Activated naive CD4-positive, alpha-beta T cell treated with anti-CD3 and anti-CD28 coated beads for 36 hours (primary cell): ENCODE measurements at regions of chr11 and their contacts with region 1.

Region 1: DNA sequence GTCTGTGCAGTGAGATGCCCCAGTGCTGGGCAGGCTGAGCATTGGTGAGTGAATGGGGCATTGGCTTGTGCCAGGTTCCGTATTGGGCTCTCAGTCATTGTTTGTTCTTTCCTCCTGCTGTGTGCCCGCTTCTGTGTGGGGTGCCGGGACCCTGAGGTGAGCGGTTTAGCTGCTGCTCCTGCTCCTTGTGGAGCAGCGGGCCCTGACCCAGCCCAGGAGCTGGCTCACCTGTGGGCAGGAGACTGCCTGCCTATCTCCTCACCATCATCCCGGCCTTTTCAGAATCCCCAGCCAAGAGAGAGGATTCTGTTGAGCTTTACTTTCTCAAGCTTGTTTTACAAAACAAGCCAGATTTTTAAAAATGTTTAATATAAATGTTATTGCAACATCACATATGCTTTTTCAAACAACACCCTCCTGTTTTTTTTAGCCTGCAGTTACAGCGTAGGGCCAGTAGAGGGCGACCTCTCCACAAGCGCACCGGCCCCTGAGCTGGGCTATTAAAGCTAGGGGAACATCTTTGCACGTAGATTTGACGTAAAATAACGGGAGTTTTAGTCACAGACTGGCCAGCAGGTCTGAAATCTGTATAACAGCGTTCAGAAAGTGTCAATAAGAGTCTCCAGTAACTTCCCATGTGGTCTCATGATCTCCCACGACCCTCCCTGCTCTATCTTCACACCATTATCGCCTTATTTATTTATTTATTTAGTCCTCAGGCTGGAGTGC is 25.1 kb upstream of the RELT start:
- DNase-seq: peak; percentile 73
- H3K4me3 Mint-ChIP-seq: no peak overlapping the region
- H3K27ac Mint-ChIP-seq: peak overlapping the region; percentile 38
- H3K4me1 Mint-ChIP-seq: no peaks in the 10 kb centered on the region
- H3K27me3 Mint-ChIP-seq: no peaks in the 10 kb centered on the region

Region 2: DNA sequence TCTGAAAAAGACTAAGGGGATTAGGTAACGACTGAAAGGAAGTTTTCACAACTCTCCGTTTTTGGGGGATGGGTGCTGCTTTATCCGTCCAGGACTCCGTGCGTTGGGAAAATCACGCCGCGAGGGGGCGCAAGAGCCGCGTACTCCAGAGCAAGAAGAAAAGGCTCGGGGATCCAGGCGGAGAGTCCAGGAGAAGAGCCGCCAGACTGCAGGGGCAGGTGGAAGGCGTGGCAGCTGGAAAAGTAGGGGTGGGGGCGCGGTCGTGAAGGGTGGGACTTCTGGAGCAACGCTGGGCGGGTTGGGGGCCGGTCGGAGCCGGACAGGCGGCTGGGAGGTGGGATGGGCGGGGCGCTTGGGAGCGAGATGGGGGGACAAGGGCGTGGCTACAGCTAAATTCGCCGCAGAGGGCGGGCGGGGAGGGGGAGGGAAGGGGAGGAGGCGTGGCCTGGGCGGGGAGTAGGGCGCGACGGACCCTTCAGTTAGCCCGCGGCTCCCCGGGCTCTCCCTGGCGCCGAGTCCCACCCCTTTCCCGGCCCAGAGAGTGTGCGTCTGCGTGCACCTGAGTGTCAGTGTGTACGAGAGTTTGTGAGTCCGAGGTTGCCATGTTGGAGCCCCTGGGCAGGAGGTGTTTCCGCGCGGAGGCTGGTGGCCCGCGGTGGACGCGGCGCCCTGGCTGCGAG is 43.6 kb before region 1 on chr11:
- CTCF ChIA-PET with region 1: interaction called, 14 read pairs
- intact Hi-C with region 1: loop called (anchors 1 kb)
- DNase-seq: peak; percentile 95
- H3K4me3 Mint-ChIP-seq: peak overlapping the region; percentile 76
- H3K27ac Mint-ChIP-seq: no peak overlapping the region
- H3K4me1 Mint-ChIP-seq: peaks cover 6% of the 10 kb centered on the region
- H3K27me3 Mint-ChIP-seq: peaks cover 15% of the 10 kb centered on the region

Region 3: GRCh38 chr11:73383249-73384124 is 32.4 kb after region 1 on chr11:
- CTCF ChIA-PET with region 1: interaction called, 12 read pairs
- intact Hi-C with region 1: no loop called
- DNase-seq: no peak
- H3K4me3 Mint-ChIP-seq: no peak overlapping the region
- H3K27ac Mint-ChIP-seq: no peak overlapping the region
- H3K4me1 Mint-ChIP-seq: peaks cover 79% of the 10 kb centered on the region
- H3K27me3 Mint-ChIP-seq: no peaks in the 10 kb centered on the region

Region 4: GRCh38 chr11:73402834-73403185 is 51.7 kb after region 1 on chr11:
- CTCF ChIA-PET with region 1: interaction called, 44 read pairs
- intact Hi-C with region 1: no loop called
- DNase-seq: peak; percentile 57
- H3K4me3 Mint-ChIP-seq: no peak overlapping the region
- H3K27ac Mint-ChIP-seq: no peak overlapping the region
- H3K4me1 Mint-ChIP-seq: no peaks in the 10 kb centered on the region
- H3K27me3 Mint-ChIP-seq: no peaks in the 10 kb centered on the region

Region 5: DNA sequence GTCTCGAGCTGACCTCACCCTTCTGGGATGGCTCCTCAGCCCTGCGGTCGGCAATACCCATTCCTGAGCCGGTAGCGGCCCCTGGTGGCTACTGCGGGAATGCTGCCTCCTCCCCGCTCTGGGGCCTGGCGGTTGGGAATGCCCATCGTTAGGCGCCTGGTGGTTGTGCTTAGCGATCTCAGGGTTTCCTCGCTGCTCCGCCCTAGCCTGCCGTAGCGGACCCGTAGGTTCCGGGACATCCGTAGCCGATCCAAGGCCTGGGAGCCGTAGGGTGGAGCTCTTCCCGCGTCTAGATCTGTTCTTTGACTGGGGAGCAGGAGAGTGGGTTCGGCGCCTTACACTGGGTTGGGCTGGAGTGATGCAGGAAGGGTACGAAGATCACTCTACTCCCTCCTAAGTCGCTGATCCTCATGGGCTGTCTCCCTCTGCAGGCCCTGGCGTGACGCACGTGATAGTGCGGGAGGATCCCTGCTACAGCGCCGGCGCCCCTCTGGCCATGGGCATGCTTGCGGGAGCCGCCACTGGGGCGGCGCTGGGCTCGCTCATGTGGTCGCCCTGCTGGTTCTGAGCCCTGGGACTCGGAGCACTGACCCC is 310.1 kb after region 1 on chr11:
- CTCF ChIA-PET with region 1: interaction called, 52 read pairs
- intact Hi-C with region 1: loop called (anchors 1 kb)
- DNase-seq: peak; percentile 93
- H3K4me3 Mint-ChIP-seq: peak overlapping the region; percentile 45
- H3K27ac Mint-ChIP-seq: no peak overlapping the region
- H3K4me1 Mint-ChIP-seq: peaks cover 6% of the 10 kb centered on the region
- H3K27me3 Mint-ChIP-seq: no peaks in the 10 kb centered on the region